ENCODE measurements at regions of chr19 and their contacts with region 1.

Region 1: GRCh38 chr19:46661020-46661731 is at the start of gene DACT3:
- DNase-seq: peak; percentile 100
- ATAC-seq: peak; percentile 85 to 96 (median 90)
- H3K4me3 ChIP-seq: peak within 1 kb of the TSS; percentile 37
- H3K4me3 Mint-ChIP-seq: peak within 1 kb of the TSS; percentile 91
- H3K27ac ChIP-seq: peak within 1 kb of the TSS; percentile 53
- H3K27ac Mint-ChIP-seq: peak within 1 kb of the TSS; percentile 80 to 88
- H3K4me1 ChIP-seq: peaks cover 29% of the 10 kb centered on the region
- H3K4me1 Mint-ChIP-seq: peaks cover 16 to 32% of the 10 kb centered on the region in 2 donors
- H3K27me3 ChIP-seq: peaks cover 28% of the 10 kb centered on the region
- H3K27me3 Mint-ChIP-seq: peaks cover 17 to 24% of the 10 kb centered on the region in 2 donors
- CTCF ChIP-seq: no peak
- total RNA-seq, gene DACT3: 0.14 to 0.20 TPM in 2 of 3 donors, not detected in the other

Region 2: GRCh38 chr19:46529622-46530462 is 131.3 kb before region 1 on chr19:
- intact Hi-C with region 1: loop called (anchors 1 kb)
- DNase-seq: peak; percentile 67 to 89
- ATAC-seq: peak; percentile 59 to 78 (median 70)
- H3K4me3 ChIP-seq: no peak overlapping the region
- H3K4me3 Mint-ChIP-seq: no peak overlapping the region
- H3K27ac ChIP-seq: no peak overlapping the region
- H3K27ac Mint-ChIP-seq: no peak overlapping the region
- H3K4me1 ChIP-seq: peaks cover 21% of the 10 kb centered on the region
- H3K4me1 Mint-ChIP-seq: peaks cover 9 to 12% of the 10 kb centered on the region in 2 donors
- H3K27me3 ChIP-seq: no peaks in the 10 kb centered on the region
- H3K27me3 Mint-ChIP-seq: peaks cover 7 to 10% of the 10 kb centered on the region in 2 donors
- CTCF ChIP-seq: peak; percentile 91

Region 3: DNA sequence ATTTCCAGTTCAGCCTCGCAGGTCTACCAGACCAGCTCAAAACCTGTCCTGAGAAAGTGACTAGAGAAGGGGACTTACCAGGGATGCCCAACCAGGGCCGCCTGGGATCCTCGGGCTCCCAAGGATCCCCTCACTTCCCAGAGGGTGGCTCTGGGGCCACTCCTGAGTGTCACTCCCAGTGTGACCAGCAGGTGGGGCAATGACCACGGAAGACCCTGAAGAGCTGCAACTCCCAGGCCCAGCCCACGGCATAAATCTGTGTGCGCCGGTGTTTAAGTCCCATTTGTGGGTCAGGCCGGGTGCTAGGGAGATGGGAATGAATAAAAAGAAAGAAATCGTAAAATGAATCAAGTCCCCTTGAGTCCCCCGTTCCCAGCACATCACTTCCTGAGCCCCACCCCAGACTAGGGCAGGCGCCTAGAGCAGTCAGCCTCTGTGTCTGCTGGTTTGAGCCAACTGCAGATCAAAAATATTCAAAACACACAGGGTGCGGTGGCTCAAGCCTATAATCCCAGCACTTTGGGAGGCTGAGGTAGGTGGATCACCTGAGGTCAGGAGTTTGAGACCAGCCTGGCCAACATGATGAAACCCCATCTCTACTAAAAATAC is 47.0 kb before region 1 on chr19:
- intact Hi-C with region 1: loop called (anchors 1 kb)
- DNase-seq: peak; percentile 74 to 90
- ATAC-seq: peak; percentile 86 to 92 (median 89)
- H3K4me3 ChIP-seq: no peak overlapping the region
- H3K4me3 Mint-ChIP-seq: no peak overlapping the region
- H3K27ac ChIP-seq: no peak overlapping the region
- H3K27ac Mint-ChIP-seq: no peak overlapping the region
- H3K4me1 ChIP-seq: peaks cover 52% of the 10 kb centered on the region
- H3K4me1 Mint-ChIP-seq: peaks cover 32 to 33% of the 10 kb centered on the region in 2 donors
- H3K27me3 ChIP-seq: no peaks in the 10 kb centered on the region
- H3K27me3 Mint-ChIP-seq: peaks cover 7 to 10% of the 10 kb centered on the region in 2 donors
- CTCF ChIP-seq: peak; percentile 78

Region 4: GRCh38 chr19:46634045-46634655 is 27.0 kb before region 1 on chr19:
- intact Hi-C with region 1: loop called (anchors 1 kb)
- DNase-seq: peak; percentile 75 to 97
- ATAC-seq: peak; percentile 72 to 85 (median 72)
- H3K4me3 ChIP-seq: peak overlapping the region; percentile 11
- H3K4me3 Mint-ChIP-seq: peak overlapping the region; percentile 61
- H3K27ac ChIP-seq: no peak overlapping the region
- H3K27ac Mint-ChIP-seq: peak overlapping the region; percentile 35 to 57
- H3K4me1 ChIP-seq: peaks cover 35% of the 10 kb centered on the region
- H3K4me1 Mint-ChIP-seq: peaks cover 0 to 12% of the 10 kb centered on the region in 2 donors
- H3K27me3 ChIP-seq: peaks cover 24% of the 10 kb centered on the region
- H3K27me3 Mint-ChIP-seq: peaks cover 17 to 27% of the 10 kb centered on the region in 2 donors
- CTCF ChIP-seq: no peak

Region 5: DNA sequence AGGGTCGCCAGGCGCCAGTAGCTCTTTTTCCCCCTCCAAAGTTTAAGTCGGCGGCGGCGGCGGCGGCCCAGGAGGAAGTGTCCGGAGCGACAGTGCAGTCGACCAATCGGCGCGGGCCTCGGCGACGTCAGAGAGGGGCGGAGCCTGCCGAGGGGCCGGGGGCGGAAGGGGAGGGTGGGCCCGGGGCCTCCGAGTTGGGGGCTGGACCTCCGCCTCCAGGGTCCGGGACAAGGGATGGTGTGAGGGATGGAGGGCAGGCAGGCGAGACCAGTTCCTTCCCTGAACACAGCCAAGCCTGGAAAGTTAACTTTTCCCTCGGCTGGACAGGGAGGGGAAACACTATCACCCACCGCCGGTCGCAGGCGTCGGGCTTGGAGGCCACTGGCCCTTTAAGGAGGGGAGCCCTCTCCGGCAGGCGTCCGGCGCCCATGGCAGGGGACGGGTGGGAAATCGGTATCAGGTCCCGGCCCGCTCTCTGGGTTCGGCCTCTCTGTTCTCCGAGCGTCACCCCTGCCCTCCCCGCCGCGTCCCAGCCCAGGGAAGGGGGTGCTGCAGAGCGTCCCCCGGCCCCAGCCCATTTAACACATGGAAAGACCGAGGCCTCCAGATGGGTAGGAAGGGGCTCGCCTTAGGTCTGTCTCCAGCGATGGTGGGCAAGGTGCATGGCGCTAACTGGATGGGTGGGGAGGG is 56.0 kb after region 1 on chr19 and contains the start of gene PRKD2:
- intact Hi-C with region 1: loop called (anchors 1 kb)
- DNase-seq: peak; percentile 87 to 93
- ATAC-seq: peak; percentile 65 to 84 (median 71)
- H3K4me3 ChIP-seq: peak within 1 kb of the TSS; percentile 93
- H3K4me3 Mint-ChIP-seq: peak within 1 kb of the TSS; percentile 98
- H3K27ac ChIP-seq: peak within 1 kb of the TSS; percentile 91
- H3K27ac Mint-ChIP-seq: peak within 1 kb of the TSS; percentile 95 to 99
- H3K4me1 ChIP-seq: peaks cover 73% of the 10 kb centered on the region
- H3K4me1 Mint-ChIP-seq: peaks cover 49 to 81% of the 10 kb centered on the region in 2 donors
- H3K27me3 ChIP-seq: no peaks in the 10 kb centered on the region
- H3K27me3 Mint-ChIP-seq: no peaks in the 10 kb centered on the region
- CTCF ChIP-seq: no peak
- total RNA-seq, gene PRKD2: 179 to 216 (median 203) TPM